GM12878 (cell line): ENCODE measurements at regions of chr7 and their contacts with region 1.

Region 1: DNA sequence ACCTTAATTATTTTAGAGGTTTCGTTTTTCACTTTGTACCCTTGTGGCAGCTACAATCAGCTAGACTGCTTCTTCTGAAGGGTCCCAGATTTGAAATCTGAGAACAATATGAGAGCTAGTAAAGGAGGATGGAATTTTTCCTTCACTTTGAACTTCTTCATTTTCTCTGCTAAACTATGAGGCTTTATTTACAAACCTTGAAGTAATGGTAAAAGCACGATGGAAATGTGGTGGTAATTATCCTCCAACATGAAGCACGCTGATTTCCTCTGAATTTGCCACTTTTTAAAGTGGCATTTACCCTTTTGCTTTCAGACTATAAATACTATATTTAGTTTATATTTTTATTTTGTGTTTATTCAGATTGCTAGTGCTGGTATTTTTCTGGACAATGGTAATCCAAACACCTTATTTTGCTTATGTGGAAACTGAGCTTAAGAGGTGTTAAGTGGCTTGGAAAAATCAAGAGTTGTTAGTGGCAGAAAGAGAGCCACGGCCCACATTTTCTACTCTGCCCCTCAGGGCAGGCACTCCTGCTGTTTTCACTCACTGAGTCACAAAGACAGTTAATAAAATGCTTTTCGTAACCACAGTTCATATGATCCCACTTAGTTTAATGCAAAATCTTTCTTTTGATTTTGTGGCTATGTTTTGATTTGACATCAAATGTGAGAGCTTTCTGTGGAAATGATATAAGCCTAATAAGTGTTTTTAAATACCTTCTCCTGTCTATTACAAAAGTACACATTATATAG is 2.7 kb downstream of the SSMEM1 start:
- DNase-seq: no peak
- ATAC-seq: no peak
- H3K4me3 ChIP-seq: no peak overlapping the region
- H3K27ac ChIP-seq: no peak overlapping the region
- H3K4me1 ChIP-seq: no peaks in the 10 kb centered on the region
- H3K27me3 ChIP-seq: no peaks in the 10 kb centered on the region
- CTCF ChIP-seq: no peak
- EP300 ChIP-seq: no peak
- POLR2A ChIP-seq: no peak
- RAD21 ChIP-seq: no peak

Region 2: DNA sequence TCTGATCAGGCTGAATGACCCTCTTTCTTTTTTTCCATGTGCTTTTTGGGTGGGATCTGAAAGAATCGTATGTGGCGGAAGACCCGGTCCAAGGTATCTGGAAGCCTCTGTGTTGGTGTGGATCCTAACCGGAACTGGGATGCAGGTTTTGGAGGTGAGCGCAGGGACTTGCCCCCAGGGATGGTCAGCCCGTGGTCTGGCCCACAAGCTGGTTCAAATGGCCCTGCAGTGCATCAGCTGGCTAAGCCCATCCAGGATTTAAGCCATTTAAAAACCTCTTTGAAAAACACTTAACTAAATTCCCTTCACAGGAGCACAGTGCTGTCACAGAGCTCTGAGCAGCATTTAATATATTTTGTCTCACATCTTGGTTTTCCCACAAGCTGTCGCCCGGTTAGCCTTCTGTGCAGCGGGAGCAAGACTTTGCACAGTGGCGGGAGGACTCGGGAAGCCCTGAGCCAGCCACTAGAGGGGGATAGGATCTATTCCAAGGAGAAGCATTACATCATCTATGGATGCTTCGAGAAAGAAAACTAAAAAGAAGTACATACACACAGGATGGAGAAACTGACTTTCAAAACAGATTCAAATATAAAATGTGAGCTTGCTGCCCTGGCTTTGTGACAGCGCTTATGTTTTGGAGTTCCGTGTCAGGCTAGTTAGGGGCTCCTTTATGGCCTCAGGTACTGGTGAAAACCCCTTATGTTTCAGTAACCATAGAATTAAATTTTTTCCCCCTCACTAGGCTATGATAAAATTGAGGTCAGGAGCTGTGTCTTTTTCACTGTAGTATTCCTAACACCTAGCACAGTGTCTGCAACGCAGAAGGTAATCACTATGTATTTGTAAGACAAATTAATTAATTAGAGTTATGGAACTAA is 67.6 kb after region 1 on chr7:
- CTCF ChIA-PET with region 1: no interaction called
- POLR2A ChIA-PET with region 1: no interaction called
- RAD21 ChIA-PET with region 1: no interaction called
- SMC1A ChIA-PET with region 1: no interaction called
- in situ Hi-C with region 1: no loop called
- intact Hi-C with region 1: loop called (anchors 10 kb)
- DNase-seq: no peak
- ATAC-seq: no peak
- H3K4me3 ChIP-seq: no peak overlapping the region
- H3K27ac ChIP-seq: no peak overlapping the region
- H3K4me1 ChIP-seq: no peaks in the 10 kb centered on the region
- H3K27me3 ChIP-seq: peaks cover 1 to 4% of the 10 kb centered on the region in 2 experiments; a peak in 1 of 4 replicates
- CTCF ChIP-seq: peak in 1 of 3 experiments; percentile 11; a peak in 2 of 6 replicates
- EP300 ChIP-seq: no peak
- POLR2A ChIP-seq: no peak
- RAD21 ChIP-seq: no peak